Activated CD4-positive, alpha-beta T cell treated with anti-CD3 and anti-CD28 coated beads, Interleukin-2, amount 10 ng/mL, durations not matched to agents 24 days and 14 days (primary cell): ENCODE measurements at regions of chr6 and their contacts with region 1.

Region 1: DNA sequence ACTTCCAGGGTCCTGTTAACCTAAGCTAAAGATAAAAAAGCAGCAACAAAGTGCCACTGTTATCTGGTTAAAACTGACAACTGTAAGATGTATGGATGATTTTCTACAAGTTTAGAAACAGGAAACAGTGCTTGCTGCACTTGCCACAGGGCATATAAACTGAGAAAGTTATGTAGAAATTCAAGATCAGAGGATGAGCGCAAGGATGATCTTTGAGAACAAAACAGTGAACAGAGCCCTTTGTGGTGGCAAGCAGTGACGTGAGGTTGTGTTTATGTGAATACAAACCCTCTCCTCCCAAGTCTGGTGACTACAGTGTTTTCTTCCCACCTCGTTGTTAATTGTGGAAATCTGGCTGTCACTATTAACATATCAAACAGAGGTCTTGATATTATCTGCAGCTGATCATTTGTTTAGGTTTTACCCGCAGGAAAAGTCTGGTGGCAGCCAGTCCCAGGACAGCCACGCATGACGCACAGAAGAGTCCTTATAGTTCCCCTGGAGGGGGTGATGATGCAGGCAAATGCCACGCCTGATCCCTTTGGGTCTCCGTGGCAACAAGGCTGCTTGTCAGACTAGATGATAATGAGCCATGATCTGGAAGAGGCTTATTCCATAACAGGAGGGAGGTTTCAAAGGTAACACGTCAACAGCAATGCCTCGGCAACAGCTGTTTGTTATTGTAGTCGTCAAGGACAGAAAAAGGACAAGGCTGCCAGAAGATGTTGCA is 43.1 kb upstream of the TNFAIP3 start:
- DNase-seq: peak; percentile 94
- H3K4me3 Mint-ChIP-seq: peak overlapping the region; percentile 76
- H3K27ac Mint-ChIP-seq: peak overlapping the region; percentile 98
- H3K4me1 Mint-ChIP-seq: peaks cover 71% of the 10 kb centered on the region
- H3K27me3 Mint-ChIP-seq: no peaks in the 10 kb centered on the region

Region 2: GRCh38 chr6:137680705-137681346 is 143.2 kb before region 1 on chr6:
- intact Hi-C with region 1: loop called (anchors 1 kb)
- DNase-seq: no peak
- H3K4me3 Mint-ChIP-seq: peak overlapping the region; percentile 22
- H3K27ac Mint-ChIP-seq: peak overlapping the region; percentile 61
- H3K4me1 Mint-ChIP-seq: peaks cover 61% of the 10 kb centered on the region
- H3K27me3 Mint-ChIP-seq: no peaks in the 10 kb centered on the region

Region 3: DNA sequence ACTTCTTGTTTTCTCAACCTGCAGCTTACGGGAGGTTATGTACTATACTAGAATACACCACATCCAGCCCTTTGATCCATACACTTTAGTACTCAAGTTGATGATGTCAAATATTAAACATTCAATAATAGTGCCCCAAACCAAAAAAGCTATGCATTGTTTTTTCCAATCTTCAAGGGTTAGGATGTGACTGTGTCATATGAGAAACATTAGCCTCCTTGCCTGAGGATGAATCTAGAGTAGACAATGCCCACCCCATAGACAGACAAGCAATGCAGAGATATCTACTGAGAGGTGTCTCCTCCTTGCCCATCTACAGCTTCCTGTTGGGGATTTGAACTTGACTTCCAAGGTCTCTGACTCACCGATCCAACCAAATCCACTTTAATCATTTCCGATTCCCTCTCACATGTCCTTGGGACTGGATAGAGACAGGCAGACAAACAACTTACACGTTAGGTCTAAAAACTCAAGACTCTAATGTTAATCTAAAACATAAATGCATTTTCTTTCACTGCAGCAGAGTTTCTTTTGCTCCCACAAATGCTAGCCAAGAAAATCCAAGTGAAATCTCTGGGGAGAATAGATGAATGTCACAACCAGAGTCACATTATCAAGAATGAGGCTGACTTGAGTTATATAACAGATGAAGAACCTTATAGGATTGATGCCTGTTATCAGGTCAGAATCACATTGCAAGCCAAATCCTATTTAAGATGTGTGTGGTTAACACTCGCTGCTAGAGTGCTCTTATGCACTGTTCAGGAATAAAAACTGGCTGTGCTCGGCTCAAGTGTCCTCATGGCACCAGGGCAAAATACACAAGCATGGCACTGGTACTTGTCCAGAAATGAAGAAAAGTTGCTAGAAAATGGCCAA is 32.5 kb before region 1 on chr6:
- intact Hi-C with region 1: loop called (anchors 1 kb)
- DNase-seq: no peak
- H3K4me3 Mint-ChIP-seq: peak overlapping the region; percentile 29
- H3K27ac Mint-ChIP-seq: peak overlapping the region; percentile 78
- H3K4me1 Mint-ChIP-seq: peaks cover 62% of the 10 kb centered on the region
- H3K27me3 Mint-ChIP-seq: no peaks in the 10 kb centered on the region

Region 4: DNA sequence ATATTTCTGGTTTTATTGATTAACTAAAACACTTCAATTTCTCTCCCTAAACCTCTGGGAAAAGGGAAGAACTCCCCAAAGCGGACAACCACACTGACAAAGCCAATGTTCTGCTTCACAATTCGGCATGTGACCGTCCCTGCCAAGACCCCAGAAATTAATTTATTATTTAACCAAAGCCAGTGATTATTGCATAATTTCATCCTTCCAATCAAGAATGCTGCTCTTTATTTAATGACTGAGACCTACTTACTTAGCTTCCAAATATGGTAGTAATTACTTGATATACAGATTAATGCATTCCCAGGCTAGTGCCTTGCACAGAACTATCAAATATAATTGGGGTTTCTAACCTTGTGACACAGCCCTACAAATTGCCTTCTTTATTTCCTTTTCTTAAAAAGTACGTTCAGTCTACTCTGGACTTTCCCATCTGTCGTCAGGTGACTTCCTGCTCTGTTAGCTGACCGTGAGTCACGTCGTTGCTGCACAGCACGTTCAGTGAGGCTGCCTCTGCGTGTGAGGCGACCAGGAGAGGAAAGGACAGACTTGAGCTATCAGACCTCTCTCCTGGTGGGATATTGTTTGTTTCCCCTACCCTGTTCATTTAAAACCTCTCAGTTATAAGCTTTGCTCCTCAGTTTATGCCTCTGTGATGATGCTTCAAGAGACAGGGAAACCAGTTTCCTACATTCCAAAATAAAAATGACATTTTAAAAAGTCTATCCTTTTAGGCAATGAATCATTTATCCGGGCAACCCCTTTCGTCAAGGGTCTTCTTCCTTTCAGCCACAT is 12.7 kb before region 1 on chr6:
- intact Hi-C with region 1: loop called (anchors 1 kb)
- DNase-seq: peak; percentile 94
- H3K4me3 Mint-ChIP-seq: peak overlapping the region; percentile 2
- H3K27ac Mint-ChIP-seq: peak overlapping the region; percentile 55
- H3K4me1 Mint-ChIP-seq: peaks cover 55% of the 10 kb centered on the region
- H3K27me3 Mint-ChIP-seq: no peaks in the 10 kb centered on the region

Region 5: DNA sequence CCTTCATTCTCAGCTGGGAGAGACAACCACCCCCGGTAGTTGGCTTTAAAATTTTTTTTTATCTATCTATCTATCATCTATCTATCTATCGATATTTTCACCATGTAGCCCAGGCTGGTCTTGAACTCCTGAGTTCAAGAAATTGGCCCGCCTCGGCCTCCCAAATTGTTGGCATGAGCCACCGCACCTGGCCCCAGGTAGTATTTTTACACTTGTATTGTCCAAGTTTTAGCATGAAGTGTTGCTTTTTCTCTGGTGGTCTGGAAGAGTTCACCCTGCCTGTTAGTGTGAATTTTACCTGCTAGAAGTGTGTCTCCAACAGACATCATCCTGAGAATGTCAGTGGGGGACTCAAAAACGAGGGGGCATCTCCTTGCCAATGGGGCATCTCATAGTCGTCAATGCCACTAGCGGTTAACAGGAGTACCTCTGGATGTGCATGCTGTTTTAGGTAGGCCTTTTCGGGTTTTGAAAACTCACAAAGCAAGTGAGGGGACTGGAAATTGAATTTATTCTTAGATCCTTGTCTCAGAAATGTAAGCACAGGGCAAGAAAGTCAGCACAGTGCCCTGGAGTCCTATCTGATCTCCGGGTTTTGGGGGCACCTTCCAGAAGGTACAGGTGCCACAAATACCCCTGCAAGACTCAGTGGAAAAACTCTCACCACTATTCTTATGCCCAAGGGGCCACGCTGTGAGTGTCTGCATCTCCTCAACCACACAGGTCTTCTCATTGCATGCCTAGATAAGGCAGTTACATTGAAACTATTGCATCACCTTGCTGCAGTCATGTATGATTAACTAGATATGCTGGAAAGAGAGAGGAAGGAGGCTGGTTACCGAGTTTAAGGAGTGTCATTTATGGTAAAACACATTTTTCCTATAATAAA is 80.2 kb after region 1 on chr6:
- intact Hi-C with region 1: loop called (anchors 2 kb)
- DNase-seq: peak; percentile 81
- H3K4me3 Mint-ChIP-seq: peak overlapping the region; percentile 75
- H3K27ac Mint-ChIP-seq: peak overlapping the region; percentile 99
- H3K4me1 Mint-ChIP-seq: peaks cover 50% of the 10 kb centered on the region
- H3K27me3 Mint-ChIP-seq: no peaks in the 10 kb centered on the region